ENCODE measurements at regions of chr3 and their contacts with region 1.

Region 1: DNA sequence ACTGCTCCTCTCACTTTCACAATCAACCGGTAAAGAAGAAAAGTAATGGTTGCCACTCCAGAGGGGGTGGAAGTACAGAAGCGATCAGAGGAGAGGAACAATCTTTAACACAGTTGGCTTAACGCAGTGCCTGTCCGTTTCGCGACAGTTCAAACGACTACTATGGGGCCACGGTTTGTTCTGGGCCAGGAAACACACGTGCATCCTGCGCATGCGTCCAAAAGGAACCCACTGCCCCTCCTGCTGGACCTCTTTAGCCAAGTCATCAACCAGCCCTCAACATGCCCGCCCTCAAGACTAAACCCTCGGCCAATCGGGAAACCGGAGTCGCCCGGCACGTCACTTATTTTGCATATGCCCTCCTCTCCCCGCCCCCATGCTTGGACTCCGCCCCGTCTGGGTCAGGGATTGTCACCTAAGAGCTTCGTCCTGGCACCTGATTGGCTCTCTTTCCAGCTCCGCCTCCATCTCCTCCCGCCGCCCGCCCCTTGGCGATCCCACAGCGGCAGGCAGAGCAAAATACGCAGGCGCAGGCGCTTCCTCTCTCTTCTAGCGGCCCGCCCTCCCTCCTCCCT is 345 bp upstream of the CDV3 start:
- DNase-seq: peak; percentile 99 to 100
- H3K4me3 ChIP-seq: peak overlapping the region; percentile 52
- H3K27ac ChIP-seq: peak overlapping the region; percentile 91
- H3K4me1 ChIP-seq: peaks cover 71% of the 10 kb centered on the region
- H3K27me3 ChIP-seq: no peaks in the 10 kb centered on the region
- CTCF ChIP-seq: no peak

Region 2: DNA sequence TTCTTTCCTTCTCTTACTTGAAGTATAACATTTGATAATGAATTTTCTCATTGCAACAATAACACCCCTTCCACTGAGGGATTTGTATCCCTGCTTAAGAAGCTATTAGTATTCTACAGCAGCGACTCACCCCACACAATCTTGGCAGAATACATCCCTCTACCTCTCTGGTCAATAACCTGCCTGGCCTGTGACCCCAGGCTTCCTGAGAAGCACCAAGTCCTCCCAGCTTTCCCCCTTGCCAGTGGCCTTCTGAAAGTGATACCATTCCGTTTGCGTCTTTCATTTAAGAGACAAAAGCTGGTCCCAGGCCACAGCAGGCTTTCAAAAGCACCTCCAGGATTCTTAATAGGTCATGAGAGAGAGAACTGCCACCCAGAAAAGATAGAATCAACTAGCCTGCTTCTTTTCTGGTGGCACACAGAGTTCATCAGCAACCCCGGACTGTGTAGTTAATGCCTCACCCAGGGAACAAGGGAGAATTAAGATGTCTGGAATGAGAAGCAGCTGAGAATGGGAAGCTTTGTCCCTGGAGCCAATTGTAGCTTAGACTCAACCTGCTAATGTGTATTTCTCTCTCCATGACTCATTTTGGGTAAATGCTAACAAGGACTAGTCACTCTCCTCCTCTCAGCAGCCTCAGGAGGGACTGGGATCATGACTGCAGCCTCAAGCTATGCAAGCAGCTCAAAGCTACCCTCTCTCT is 1437.4 kb before region 1 on chr3:
- CTCF ChIA-PET with region 1: no interaction called
- POLR2A ChIA-PET with region 1: no interaction called
- intact Hi-C with region 1: loop called (anchors 10 kb)
- DNase-seq: peak; percentile 71 to 97
- H3K4me3 ChIP-seq: peak overlapping the region; percentile 52
- H3K27ac ChIP-seq: peak overlapping the region; percentile 100
- H3K4me1 ChIP-seq: peaks cover 50% of the 10 kb centered on the region
- H3K27me3 ChIP-seq: no peaks in the 10 kb centered on the region
- CTCF ChIP-seq: no peak

Region 3: GRCh38 chr3:133464573-133464972 is 108.6 kb before region 1 on chr3:
- CTCF ChIA-PET with region 1: interaction called, 15 read pairs
- POLR2A ChIA-PET with region 1: interaction called, 5 read pairs
- intact Hi-C with region 1: loop called (anchors 1 kb)
- DNase-seq: no peak
- H3K4me3 ChIP-seq: no peak overlapping the region
- H3K27ac ChIP-seq: no peak overlapping the region
- H3K4me1 ChIP-seq: peaks cover 43% of the 10 kb centered on the region
- H3K27me3 ChIP-seq: no peaks in the 10 kb centered on the region
- CTCF ChIP-seq: peak; percentile 42; the same call in 1 of the 2 replicates

Region 4: DNA sequence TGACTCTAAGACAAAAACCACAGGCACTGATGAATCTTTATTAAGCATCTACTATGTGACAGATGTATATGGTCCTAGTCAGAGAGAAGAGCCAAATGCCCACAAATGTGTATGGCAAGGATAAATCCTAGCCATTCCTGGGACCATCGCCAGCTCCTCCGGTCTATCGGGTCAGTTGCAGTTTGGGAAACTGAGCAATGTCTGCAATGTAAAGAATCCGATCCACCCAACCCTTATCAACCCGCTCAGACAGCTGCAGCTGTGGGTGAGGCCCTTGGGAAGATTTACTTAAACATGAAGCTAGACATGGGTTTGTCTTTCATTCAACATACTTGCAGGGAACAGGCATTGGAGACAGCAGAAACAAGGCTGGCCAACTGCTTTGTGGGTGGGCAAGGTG is 40.2 kb before region 1 on chr3:
- CTCF ChIA-PET with region 1: no interaction called
- POLR2A ChIA-PET with region 1: interaction called, 14 read pairs
- intact Hi-C with region 1: loop called (anchors 5 kb)
- DNase-seq: no peak
- H3K4me3 ChIP-seq: no peak overlapping the region
- H3K27ac ChIP-seq: no peak overlapping the region
- H3K4me1 ChIP-seq: peaks cover 20% of the 10 kb centered on the region
- H3K27me3 ChIP-seq: no peaks in the 10 kb centered on the region
- CTCF ChIP-seq: no peak

Region 5: GRCh38 chr3:133591271-133591742 is 18.2 kb after region 1 on chr3:
- CTCF ChIA-PET with region 1: interaction called, 4 read pairs
- POLR2A ChIA-PET with region 1: interaction called, 7 read pairs
- intact Hi-C with region 1: loop called (anchors 2 kb)
- DNase-seq: peak; percentile 51 to 87
- H3K4me3 ChIP-seq: no peak overlapping the region
- H3K27ac ChIP-seq: peak overlapping the region; percentile 68
- H3K4me1 ChIP-seq: peaks cover 26% of the 10 kb centered on the region
- H3K27me3 ChIP-seq: no peaks in the 10 kb centered on the region
- CTCF ChIP-seq: no peak

Region 6: GRCh38 chr3:133805527-133806475 is 232.7 kb after region 1 on chr3 and contains the start of gene SRPRB:
- CTCF ChIA-PET with region 1: no interaction called
- POLR2A ChIA-PET with region 1: no interaction called
- intact Hi-C with region 1: loop called (anchors 10 kb)
- DNase-seq: peak; percentile 89 to 92
- H3K4me3 ChIP-seq: peak within 1 kb of the TSS; percentile 79
- H3K27ac ChIP-seq: peak within 1 kb of the TSS; percentile 43; the same call in 1 of the 2 replicates
- H3K4me1 ChIP-seq: peaks cover 18% of the 10 kb centered on the region
- H3K27me3 ChIP-seq: no peaks in the 10 kb centered on the region
- CTCF ChIP-seq: no peak
- total RNA-seq, gene SRPRB: 25.5 and 29.8 TPM in 2 replicates

Region 7: GRCh38 chr3:134364061-134364935 is 791.2 kb after region 1 on chr3:
- CTCF ChIA-PET with region 1: no interaction called
- POLR2A ChIA-PET with region 1: no interaction called
- intact Hi-C with region 1: loop called (anchors 5 kb)
- DNase-seq: peak; percentile 95 to 98
- H3K4me3 ChIP-seq: peak overlapping the region; percentile 54
- H3K27ac ChIP-seq: peak overlapping the region; percentile 100
- H3K4me1 ChIP-seq: peaks cover 96% of the 10 kb centered on the region
- H3K27me3 ChIP-seq: no peaks in the 10 kb centered on the region
- CTCF ChIP-seq: no peak

Measured in PC-9 (cell line).